ENCODE measurements at regions of chr11 and their contacts with region 1.

Region 1: DNA sequence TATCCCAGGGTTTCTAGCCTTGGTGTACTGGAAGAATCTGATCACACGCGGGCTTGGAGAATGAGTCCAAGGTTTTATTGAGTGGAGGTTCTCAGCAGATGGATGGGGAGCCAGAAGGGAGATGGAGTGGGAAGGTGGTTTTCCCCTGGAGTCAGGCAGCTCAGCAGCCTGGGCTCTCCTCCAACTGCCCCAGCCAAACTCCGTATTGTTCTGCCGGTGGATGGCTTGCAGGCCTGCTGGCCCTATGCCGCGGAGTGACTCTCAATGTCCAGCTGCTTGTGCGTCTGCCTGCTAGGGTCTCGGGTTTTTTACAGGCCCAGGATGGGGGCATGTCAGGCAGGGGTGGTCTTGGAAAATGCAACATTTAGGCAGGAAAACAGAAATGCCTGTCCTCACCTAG is 162.4 kb upstream of the LMO1 start:
- DNase-seq: no peak
- H3K4me3 ChIP-seq: no peak overlapping the region
- H3K27me3 ChIP-seq: no peaks in the 10 kb centered on the region
- CTCF ChIP-seq: no peak

Region 2: GRCh38 chr11:8415195-8415594 is 10.9 kb before region 1 on chr11:
- CTCF ChIA-PET with region 1: no interaction called
- POLR2A ChIA-PET with region 1: no interaction called
- DNase-seq: no peak
- H3K4me3 ChIP-seq: no peak overlapping the region
- H3K27me3 ChIP-seq: no peaks in the 10 kb centered on the region
- CTCF ChIP-seq: no peak

Region 3: GRCh38 chr11:8488395-8488794 is 62.3 kb after region 1 on chr11:
- CTCF ChIA-PET with region 1: no interaction called
- POLR2A ChIA-PET with region 1: interaction called, 10 read pairs
- DNase-seq: no peak
- H3K4me3 ChIP-seq: no peak overlapping the region
- H3K27me3 ChIP-seq: no peaks in the 10 kb centered on the region
- CTCF ChIP-seq: no peak